GM10248 (cell line): ENCODE measurements at regions of chr1 and their contacts with region 1.

Region 1: GRCh38 chr1:94854458-94855306 is 34.5 kb downstream of the SLC44A3 start:
- DNase-seq: peak; percentile 87
- CTCF ChIP-seq: peak; percentile 92

Region 2: DNA sequence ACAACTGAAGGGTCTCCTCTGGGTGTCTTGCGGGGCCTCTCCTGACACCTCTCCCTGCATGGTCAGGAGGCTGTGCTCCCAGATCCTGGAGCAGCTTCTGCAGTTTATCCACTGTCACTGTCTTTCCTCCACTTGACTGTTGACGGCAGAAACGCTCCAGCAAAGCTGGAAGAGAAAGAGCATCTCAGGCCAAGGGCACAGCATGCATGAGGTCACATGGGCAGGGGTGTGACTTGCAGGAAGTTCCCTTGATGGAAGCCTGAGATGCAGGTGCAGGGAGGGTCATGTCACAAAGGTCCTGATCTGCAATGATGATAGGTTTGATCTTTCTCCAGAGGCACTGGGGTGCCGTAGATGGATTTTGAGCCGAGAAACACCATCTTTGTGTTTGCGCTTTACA is 11.3 kb before region 1 on chr1:
- CTCF ChIA-PET with region 1: interaction called, 41 read pairs
- POLR2A ChIA-PET with region 1: no interaction called
- DNase-seq: no peak
- CTCF ChIP-seq: no peak

Region 3: GRCh38 chr1:95006681-95007080 is 152.0 kb after region 1 on chr1:
- CTCF ChIA-PET with region 1: interaction called, 12 read pairs
- POLR2A ChIA-PET with region 1: no interaction called
- DNase-seq: no peak
- CTCF ChIP-seq: no peak

Region 4: DNA sequence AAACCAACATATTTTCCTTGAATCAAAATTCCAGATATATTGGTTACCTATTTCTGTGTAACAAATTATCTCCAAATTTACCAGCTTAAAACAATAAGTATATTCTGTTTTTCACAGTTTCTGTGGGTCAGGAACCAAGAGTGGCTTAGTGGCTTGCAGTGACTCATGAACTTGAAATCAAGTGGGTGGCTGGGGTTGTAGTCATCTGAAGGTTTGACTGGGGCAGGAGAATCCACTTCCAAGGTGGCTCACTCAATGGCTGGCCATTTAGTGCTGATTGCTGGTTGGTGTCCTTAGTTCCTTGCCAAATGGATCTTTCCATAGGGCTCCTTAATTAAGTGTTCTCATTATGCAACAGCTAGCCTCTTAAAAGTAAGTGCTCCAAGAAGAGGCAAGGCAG is 174.3 kb after region 1 on chr1:
- CTCF ChIA-PET with region 1: interaction called, 17 read pairs
- POLR2A ChIA-PET with region 1: no interaction called
- DNase-seq: no peak
- CTCF ChIP-seq: no peak

Region 5: GRCh38 chr1:95043141-95043980 is 188.7 kb after region 1 on chr1:
- CTCF ChIA-PET with region 1: interaction called, 116 read pairs
- POLR2A ChIA-PET with region 1: interaction called, 4 read pairs
- DNase-seq: peak; percentile 70
- CTCF ChIP-seq: peak; percentile 99